Dorsolateral prefrontal cortex (tissue), 120 donors: ENCODE measurements at regions of chr5 and their contacts with region 1.

Region 1: GRCh38 chr5:43191740-43192557 is at the start of gene NIM1K:
- DNase-seq: peak; percentile 78 to 94 (median 92)
- H3K4me3 ChIP-seq: peak within 1 kb of the TSS; percentile 56 to 95 (median 85)
- H3K27ac ChIP-seq: peak within 1 kb of the TSS; percentile 19 to 96 (median 91)
- H3K27me3 ChIP-seq: no peaks in the 10 kb centered on the region
- CTCF ChIP-seq: peak in 6 of 56 donors; percentile 8 to 29 (median 14)
- total RNA-seq, gene NIM1K: 14.2 to 33.1 (median 26.1) TPM

Region 2: DNA sequence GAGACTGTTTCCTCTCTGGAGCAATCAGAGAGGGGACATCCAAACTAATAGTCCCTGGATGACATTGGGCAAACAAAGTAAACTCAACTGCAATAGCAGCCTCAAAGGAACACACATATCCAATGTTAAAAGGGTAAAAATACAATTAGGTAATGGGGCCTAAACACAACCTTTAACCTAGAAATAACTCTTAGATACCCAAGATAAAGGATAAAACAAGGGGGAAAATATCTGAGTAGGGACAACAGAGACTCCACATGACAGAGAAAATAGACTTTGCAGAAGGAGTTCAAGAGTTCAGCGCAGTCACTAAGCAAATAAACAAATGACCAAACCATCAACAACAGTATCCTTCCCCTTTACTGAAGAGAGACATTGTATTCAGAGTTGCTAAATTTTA is 1117.6 kb before region 1 on chr5:
- intact Hi-C with region 1: no loop called
- DNase-seq: no peak
- H3K4me3 ChIP-seq: no peak overlapping the region
- H3K27ac ChIP-seq: no peak overlapping the region
- H3K27me3 ChIP-seq: peaks cover 0 to 3% (median 0%) of the 10 kb centered on the region in 45 donors
- CTCF ChIP-seq: no peak

Region 3: GRCh38 chr5:42985129-42986037 is 206.6 kb before region 1 on chr5:
- intact Hi-C with region 1: no loop called
- DNase-seq: no peak
- H3K4me3 ChIP-seq: no peak overlapping the region
- H3K27ac ChIP-seq: no peak overlapping the region
- H3K27me3 ChIP-seq: peaks cover 0 to 57% (median 17%) of the 10 kb centered on the region in 45 donors
- CTCF ChIP-seq: no peak

Region 4: GRCh38 chr5:43066799-43067741 is 124.9 kb before region 1 on chr5:
- intact Hi-C with region 1: loop called (anchors 2 to 5 kb)
- DNase-seq: peak; percentile 73 to 94 (median 86)
- H3K4me3 ChIP-seq: peak overlapping the region; percentile 54 to 96 (median 85)
- H3K27ac ChIP-seq: peak overlapping the region; percentile 96 to 100 (median 100)
- H3K27me3 ChIP-seq: no peaks in the 10 kb centered on the region
- CTCF ChIP-seq: peak in 27 of 56 donors; percentile 4 to 50 (median 22)

Region 5: GRCh38 chr5:43105369-43106289 is 86.3 kb before region 1 on chr5:
- intact Hi-C with region 1: loop called in 1 of 2 experiments (anchors 5 kb)
- DNase-seq: peak; percentile 77 to 87 (median 84)
- H3K4me3 ChIP-seq: peak overlapping the region; percentile 8 to 74 (median 55)
- H3K27ac ChIP-seq: peak overlapping the region in 55 of 59 donors; percentile 2 to 89 (median 69)
- H3K27me3 ChIP-seq: no peaks in the 10 kb centered on the region
- CTCF ChIP-seq: peak; percentile 85 to 100 (median 98)

Region 6: DNA sequence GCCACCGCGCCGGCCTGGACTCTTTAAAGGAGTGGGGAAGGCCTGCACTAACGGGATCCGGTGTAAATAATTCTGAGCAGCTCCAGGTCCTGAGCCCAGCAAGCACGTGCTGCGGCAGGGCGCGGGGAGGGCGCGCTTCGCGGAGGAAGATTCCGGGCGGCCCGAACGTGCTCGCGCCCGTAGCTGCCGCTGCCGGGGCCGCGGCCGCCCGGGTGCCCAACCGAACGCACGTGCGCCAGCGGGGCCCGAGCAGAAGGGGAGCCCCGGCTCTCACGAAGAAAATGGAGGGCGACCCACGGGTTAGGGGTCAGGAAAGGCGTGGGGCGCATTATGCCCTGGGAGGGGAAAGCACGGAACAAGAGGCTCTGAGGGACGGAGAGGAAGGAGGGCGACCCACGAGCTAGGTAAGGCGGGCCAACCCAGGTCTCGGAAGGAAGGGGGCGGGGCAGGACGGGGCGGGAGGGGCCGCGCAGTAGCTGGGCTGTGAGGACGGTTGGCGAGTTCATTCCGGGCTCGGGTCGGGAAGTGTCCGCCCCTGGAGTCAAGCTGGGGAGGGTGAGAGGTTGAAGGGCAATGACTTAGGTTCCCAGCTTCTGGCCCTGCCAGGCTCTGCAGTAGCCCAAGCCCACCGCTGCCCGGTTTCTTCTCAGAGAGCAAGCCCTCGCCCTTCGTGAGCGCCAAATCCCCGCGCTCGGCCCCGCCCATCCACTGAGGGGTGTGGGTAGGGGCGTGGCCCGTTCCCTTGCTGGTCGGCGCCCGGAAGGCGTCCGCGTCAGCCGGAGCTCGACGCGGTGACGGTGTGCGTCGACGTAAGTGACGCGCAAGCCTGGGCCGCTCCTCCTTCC is 71.0 kb before region 1 on chr5 and contains the start of gene ZNF131:
- intact Hi-C with region 1: loop called (anchors 1 to 5 kb)
- DNase-seq: peak; percentile 90 to 98 (median 95)
- H3K4me3 ChIP-seq: peak within 1 kb of the TSS; percentile 62 to 99 (median 91)
- H3K27ac ChIP-seq: peak within 1 kb of the TSS; percentile 77 to 100 (median 97)
- H3K27me3 ChIP-seq: no peaks in the 10 kb centered on the region
- CTCF ChIP-seq: peak in 9 of 56 donors; percentile 5 to 35 (median 21)
- total RNA-seq, gene ZNF131: 29.1 to 65.2 (median 49.2) TPM

Region 7: DNA sequence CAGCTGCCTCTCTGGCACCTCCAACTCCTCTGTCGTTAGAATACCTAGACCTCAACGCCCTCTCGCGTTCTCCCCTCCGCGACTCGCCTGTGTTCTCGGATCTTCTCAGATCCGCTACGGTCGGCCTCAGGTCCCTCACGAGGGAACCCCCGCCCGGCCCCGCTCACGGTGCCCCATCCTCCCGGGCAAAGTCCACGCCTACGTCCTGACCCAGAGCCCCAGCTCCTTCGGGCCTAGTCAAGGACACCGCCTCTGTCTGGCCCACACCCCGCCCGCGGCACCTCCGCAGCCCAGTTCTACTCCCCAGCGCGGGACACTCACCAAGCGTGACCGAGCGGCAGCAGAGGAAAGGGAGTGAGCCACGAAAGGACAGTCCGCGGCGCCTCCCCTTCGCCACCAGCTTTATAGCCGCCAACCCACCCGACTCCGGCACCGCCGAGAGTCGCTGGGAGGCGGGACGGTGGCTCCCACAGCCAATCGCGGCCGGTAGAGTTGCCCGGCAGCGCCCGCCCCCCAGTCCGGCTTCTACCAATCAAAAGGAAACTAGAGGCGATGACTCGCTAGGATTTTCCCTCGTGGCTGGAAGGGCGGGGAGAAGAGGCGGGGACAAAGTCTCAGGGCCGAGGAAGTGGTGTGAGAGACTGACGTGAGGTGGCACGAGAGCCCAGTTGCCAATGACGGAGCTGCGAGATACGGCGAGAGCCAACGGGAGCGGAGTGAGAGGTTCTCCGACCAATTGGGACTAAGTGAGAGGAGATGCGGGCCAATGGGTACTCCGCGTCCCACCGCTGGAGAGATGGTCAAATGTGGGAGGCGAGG is 121.3 kb after region 1 on chr5 and contains the start of gene HMGCS1:
- intact Hi-C with region 1: loop called (anchors 2 to 5 kb)
- DNase-seq: peak; percentile 95 to 99 (median 99)
- H3K4me3 ChIP-seq: peak within 1 kb of the TSS; percentile 61 to 100 (median 95)
- H3K27ac ChIP-seq: peak within 1 kb of the TSS; percentile 62 to 97 (median 91)
- H3K27me3 ChIP-seq: no peaks in the 10 kb centered on the region
- CTCF ChIP-seq: peak in 28 of 56 donors; percentile 5 to 57 (median 24)
- total RNA-seq, gene HMGCS1: 39.2 to 223 (median 105) TPM

Region 8: DNA sequence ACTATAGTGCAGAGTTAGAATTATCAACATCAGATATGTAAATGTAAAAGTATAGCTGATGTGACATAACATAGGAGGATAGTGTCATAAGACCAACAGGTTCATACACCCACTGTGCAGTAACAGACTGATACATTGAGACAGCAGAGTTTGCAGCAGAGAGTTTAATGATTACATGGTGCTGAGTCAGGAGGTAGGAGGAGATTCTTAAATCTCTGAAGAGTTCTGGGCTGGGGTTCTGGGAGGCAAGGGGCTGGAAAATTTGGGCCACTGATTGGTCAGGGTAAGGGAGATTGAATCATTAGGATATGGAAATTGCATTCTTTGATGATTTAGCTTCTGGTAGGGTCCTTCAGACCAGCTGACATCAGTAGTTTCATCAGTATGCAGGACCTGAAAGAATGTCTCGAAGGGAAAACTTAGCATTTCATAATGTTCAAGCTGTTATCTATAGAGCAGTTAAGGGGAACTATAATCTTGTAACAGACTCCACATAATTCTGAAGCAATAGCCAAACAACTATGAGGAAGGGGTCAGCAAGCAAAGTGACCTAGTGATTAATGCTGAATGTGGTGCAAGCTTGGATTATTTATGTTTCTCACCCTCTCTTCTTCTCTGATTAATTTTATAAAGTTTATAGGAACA is 184.7 kb after region 1 on chr5:
- intact Hi-C with region 1: no loop called
- DNase-seq: no peak
- H3K4me3 ChIP-seq: no peak overlapping the region
- H3K27ac ChIP-seq: no peak overlapping the region
- H3K27me3 ChIP-seq: no peaks in the 10 kb centered on the region
- CTCF ChIP-seq: no peak

Region 9: GRCh38 chr5:43389679-43390329 is 197.9 kb after region 1 on chr5:
- intact Hi-C with region 1: loop called in 1 of 2 experiments (anchors 5 kb)
- DNase-seq: peak in 5 of 10 donors; percentile 6 to 62 (median 36)
- H3K4me3 ChIP-seq: peak overlapping the region in 3 of 59 donors; percentile 8 to 32 (median 13)
- H3K27ac ChIP-seq: peak overlapping the region in 2 of 59 donors; percentile 17 to 21
- H3K27me3 ChIP-seq: no peaks in the 10 kb centered on the region
- CTCF ChIP-seq: peak; percentile 80 to 99 (median 90)